ENCODE measurements at regions of chr16 and their contacts with region 1.

Region 1: GRCh38 chr16:8436931-8437330 is 153.4 kb downstream of the TMEM114 start:
- DNase-seq: no peak
- H3K4me3 ChIP-seq: no peak overlapping the region
- H3K27ac ChIP-seq: no peak overlapping the region
- H3K4me1 ChIP-seq: no peaks in the 10 kb centered on the region
- H3K27me3 ChIP-seq: no peaks in the 10 kb centered on the region
- CTCF ChIP-seq: no peak
- EP300 ChIP-seq: no peak
- POLR2A ChIP-seq: no peak

Region 2: DNA sequence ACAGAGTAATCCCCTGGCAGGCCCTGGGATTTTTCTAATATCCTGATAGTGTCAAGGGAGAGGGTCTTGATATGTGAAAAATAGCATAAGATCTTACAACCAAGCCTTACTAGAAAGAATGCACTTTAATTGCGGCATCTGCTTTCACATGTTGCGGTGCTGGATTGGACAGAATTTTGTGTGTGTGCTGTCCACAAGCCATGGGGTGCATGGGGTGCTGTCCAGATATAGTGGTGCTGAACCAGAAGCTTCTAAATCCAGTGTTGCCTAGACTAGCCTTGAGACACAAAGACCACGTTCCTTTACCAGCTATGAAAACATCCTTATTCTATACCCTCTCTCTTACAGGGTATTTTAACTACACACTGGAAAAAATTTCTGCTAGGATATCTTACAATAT is 90.7 kb before region 1 on chr16:
- in situ Hi-C with region 1: loop called in 1 of 4 experiments (anchors 25 kb)
- intact Hi-C with region 1: no loop called
- DNase-seq: no peak
- H3K4me3 ChIP-seq: no peak overlapping the region
- H3K27ac ChIP-seq: no peak overlapping the region
- H3K4me1 ChIP-seq: no peaks in the 10 kb centered on the region
- H3K27me3 ChIP-seq: no peaks in the 10 kb centered on the region
- CTCF ChIP-seq: no peak
- EP300 ChIP-seq: no peak
- POLR2A ChIP-seq: no peak

Measured in transverse colon (tissue), 4 donors.